CD4-positive, alpha-beta memory T cell (primary cell): ENCODE measurements at regions of chrX and their contacts with region 1.

Region 1: DNA sequence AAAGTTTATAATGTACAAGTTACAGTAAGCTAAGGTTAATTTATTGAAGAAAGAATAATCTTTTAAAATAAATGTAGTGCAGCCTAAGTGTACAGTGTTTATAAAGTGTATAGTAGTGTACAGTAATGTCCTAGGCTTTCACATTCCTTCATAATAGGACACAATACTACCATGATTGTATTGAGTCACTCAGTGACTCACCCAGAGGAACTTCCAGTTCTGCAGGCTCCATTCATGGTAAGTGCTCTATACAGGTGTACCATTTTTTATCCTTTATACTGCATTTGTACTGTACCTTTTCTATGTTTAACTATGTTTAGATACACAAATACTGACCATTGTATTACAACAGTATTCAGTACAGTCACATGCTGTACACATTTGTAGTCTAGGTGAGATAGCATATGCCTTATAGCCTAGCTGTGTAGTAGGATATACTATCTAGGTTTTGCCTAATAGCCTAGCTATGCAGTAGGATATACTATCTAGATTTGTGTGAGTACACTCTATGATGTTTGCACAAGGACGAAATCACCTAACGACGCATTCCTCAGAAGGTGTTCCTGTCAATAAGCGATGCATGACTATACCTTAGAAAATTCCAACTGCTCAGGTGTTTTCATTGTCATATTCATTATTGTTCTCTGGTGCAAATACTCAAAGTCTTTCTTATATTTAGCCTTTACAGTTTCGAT is 5.5 kb upstream of the TMEM255A start:
- DNase-seq: no peak
- H3K4me3 ChIP-seq: no peak overlapping the region
- H3K4me3 Mint-ChIP-seq: no peak overlapping the region
- H3K27ac ChIP-seq: no peak overlapping the region
- H3K27ac Mint-ChIP-seq: no peak overlapping the region
- H3K4me1 ChIP-seq: no peaks in the 10 kb centered on the region
- H3K4me1 Mint-ChIP-seq: peaks cover 0 to 2% (median under 1%) of the 10 kb centered on the region in 4 donors
- H3K27me3 ChIP-seq: no peaks in the 10 kb centered on the region
- H3K27me3 Mint-ChIP-seq: no peaks in the 10 kb centered on the region

Region 2: GRCh38 chrX:120380699-120381098 is 64.0 kb after region 1 on chrX:
- CTCF ChIA-PET with region 1: no interaction called
- POLR2A ChIA-PET with region 1: no interaction called
- intact Hi-C with region 1: no loop called
- DNase-seq: peak; percentile 39 to 54 (median 47)
- H3K4me3 ChIP-seq: no peak overlapping the region
- H3K4me3 Mint-ChIP-seq: no peak overlapping the region
- H3K27ac ChIP-seq: no peak overlapping the region
- H3K27ac Mint-ChIP-seq: no peak overlapping the region
- H3K4me1 ChIP-seq: no peaks in the 10 kb centered on the region
- H3K4me1 Mint-ChIP-seq: peaks cover 0 to 7% (median 4%) of the 10 kb centered on the region in 4 donors
- H3K27me3 ChIP-seq: no peaks in the 10 kb centered on the region
- H3K27me3 Mint-ChIP-seq: peaks cover 0 to 1% of the 10 kb centered on the region in 2 donors

Region 3: GRCh38 chrX:120457766-120458180 is 141.0 kb after region 1 on chrX:
- CTCF ChIA-PET with region 1: no interaction called
- POLR2A ChIA-PET with region 1: no interaction called
- intact Hi-C with region 1: loop called (anchors 5 kb)
- DNase-seq: no peak
- H3K4me3 ChIP-seq: no peak overlapping the region
- H3K4me3 Mint-ChIP-seq: peak overlapping the region in 4 of 8 donors; percentile 63 to 83 (median 68)
- H3K27ac ChIP-seq: peak overlapping the region; percentile 31
- H3K27ac Mint-ChIP-seq: peak overlapping the region in 6 of 7 donors; percentile 20 to 77 (median 35)
- H3K4me1 ChIP-seq: peaks cover 48% of the 10 kb centered on the region
- H3K4me1 Mint-ChIP-seq: peaks cover 31 to 60% (median 39%) of the 10 kb centered on the region in 4 donors
- H3K27me3 ChIP-seq: no peaks in the 10 kb centered on the region
- H3K27me3 Mint-ChIP-seq: no peaks in the 10 kb centered on the region